Activated T-helper 1 cell treated with anti-CD3 and anti-CD28 coated beads, Interleukin-12 subunit alpha, Interleukin-12 subunit beta, Interleukin-2, Interleukin-4 antibody, amounts not matched to agents 30 ng/mL and 10 ng/mL and 1 ng/mL, durations not matched to agents 14 hours and 24 hours and 36 hours (primary cell): ENCODE measurements at regions of chr4 and their contacts with region 1.

Region 1: DNA sequence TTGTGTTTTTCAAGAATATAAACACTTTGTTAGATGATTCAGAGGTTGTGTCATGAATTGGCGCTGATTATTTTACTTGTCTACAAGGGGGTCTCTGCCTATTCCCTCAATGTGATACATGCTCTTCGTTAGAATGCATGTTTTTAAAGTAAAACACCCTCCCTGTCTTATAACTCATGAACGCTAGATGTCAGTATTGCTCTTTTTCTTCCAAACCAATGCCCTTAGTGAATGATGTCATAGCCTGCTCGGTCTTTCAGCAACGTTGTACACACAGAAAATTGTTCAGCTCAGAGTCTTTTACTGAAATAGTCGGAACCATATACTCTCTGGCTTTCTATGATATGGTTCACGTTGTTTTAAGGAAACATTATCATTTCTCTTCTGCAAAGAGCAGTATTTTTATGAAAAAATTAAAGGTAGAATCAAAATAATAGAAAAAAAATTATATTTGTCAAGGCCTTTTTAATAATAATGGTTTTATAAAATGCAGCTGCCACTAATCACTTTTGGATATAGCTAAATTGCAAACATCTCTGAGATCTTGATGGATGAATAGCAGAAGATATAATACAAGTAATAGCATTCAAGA is 292.9 kb downstream of the TLL1 start:
- DNase-seq: no peak
- H3K4me3 Mint-ChIP-seq: no peak overlapping the region
- H3K27ac Mint-ChIP-seq: no peak overlapping the region
- H3K4me1 Mint-ChIP-seq: no peaks in the 10 kb centered on the region
- H3K27me3 Mint-ChIP-seq: no peaks in the 10 kb centered on the region

Region 2: GRCh38 chr4:166252487-166253402 is 86.8 kb after region 1 on chr4:
- intact Hi-C with region 1: loop called (anchors 2 kb)
- DNase-seq: no peak
- H3K4me3 Mint-ChIP-seq: no peak overlapping the region
- H3K27ac Mint-ChIP-seq: no peak overlapping the region
- H3K4me1 Mint-ChIP-seq: no peaks in the 10 kb centered on the region
- H3K27me3 Mint-ChIP-seq: no peaks in the 10 kb centered on the region

Region 3: GRCh38 chr4:166594326-166594946 is 428.5 kb after region 1 on chr4:
- intact Hi-C with region 1: loop called (anchors 5 kb)
- DNase-seq: no peak
- H3K4me3 Mint-ChIP-seq: no peak overlapping the region
- H3K27ac Mint-ChIP-seq: no peak overlapping the region
- H3K4me1 Mint-ChIP-seq: no peaks in the 10 kb centered on the region
- H3K27me3 Mint-ChIP-seq: no peaks in the 10 kb centered on the region

Region 4: GRCh38 chr4:168153596-168154440 is 1987.9 kb after region 1 on chr4:
- intact Hi-C with region 1: loop called (anchors 2 kb)
- DNase-seq: peak; percentile 14
- H3K4me3 Mint-ChIP-seq: no peak overlapping the region
- H3K27ac Mint-ChIP-seq: no peak overlapping the region
- H3K4me1 Mint-ChIP-seq: peaks cover 8% of the 10 kb centered on the region
- H3K27me3 Mint-ChIP-seq: no peaks in the 10 kb centered on the region